Heart left ventricle (tissue), 16 donors: ENCODE measurements at regions of chr13 and their contacts with region 1.

Region 1: GRCh38 chr13:36154567-36155291 is 23.5 kb upstream of the DCLK1 start:
- DNase-seq: peak in 3 of 5 donors; percentile 18 to 54 (median 30)
- ATAC-seq: peak in 3 of 4 donors; percentile 56 to 90 (median 80)
- H3K4me3 ChIP-seq: peak overlapping the region in 11 of 12 donors; percentile 9 to 54 (median 43)
- H3K27ac ChIP-seq: peak overlapping the region in 2 of 12 donors; percentile 13 to 44
- H3K4me1 ChIP-seq: peaks cover 0 to 10% (median 3%) of the 10 kb centered on the region in 12 donors
- H3K27me3 ChIP-seq: peaks cover 0 to 4% (median 0%) of the 10 kb centered on the region in 9 donors
- CTCF ChIP-seq: no peak
- POLR2A ChIP-seq: no peak

Region 2: GRCh38 chr13:36261976-36262375 is 107.2 kb after region 1 on chr13:
- intact Hi-C with region 1: loop called in 1 of 10 experiments (anchors 10 kb)
- DNase-seq: no peak
- ATAC-seq: no peak
- H3K4me3 ChIP-seq: no peak overlapping the region
- H3K27ac ChIP-seq: no peak overlapping the region
- H3K4me1 ChIP-seq: no peaks in the 10 kb centered on the region
- H3K27me3 ChIP-seq: no peaks in the 10 kb centered on the region
- CTCF ChIP-seq: no peak
- POLR2A ChIP-seq: no peak

Region 3: GRCh38 chr13:36616706-36617105 is 462.0 kb after region 1 on chr13:
- intact Hi-C with region 1: no loop called
- DNase-seq: no peak
- ATAC-seq: no peak
- H3K4me3 ChIP-seq: no peak overlapping the region
- H3K27ac ChIP-seq: no peak overlapping the region
- H3K4me1 ChIP-seq: peaks cover 0 to 4% (median 0%) of the 10 kb centered on the region in 12 donors
- H3K27me3 ChIP-seq: no peaks in the 10 kb centered on the region
- CTCF ChIP-seq: no peak
- POLR2A ChIP-seq: no peak